Prostate gland (tissue), 2 donors: ENCODE measurements at regions of chr1 and their contacts with region 1.

Region 1: GRCh38 chr1:54950369-54951163 is 29.9 kb upstream of the TMEM61 start:
- DNase-seq: peak; percentile 75
- H3K4me3 ChIP-seq: no peak overlapping the region
- H3K27ac ChIP-seq: no peak overlapping the region
- H3K4me1 ChIP-seq: no peaks in the 10 kb centered on the region
- H3K27me3 ChIP-seq: no peaks in the 10 kb centered on the region
- CTCF ChIP-seq: peak; percentile 64 to 93 (median 90)
- POLR2A ChIP-seq: no peak

Region 2: GRCh38 chr1:54996359-54996868 is 45.8 kb after region 1 on chr1:
- intact Hi-C with region 1: loop called (anchors 2 kb)
- DNase-seq: peak; percentile 43
- H3K4me3 ChIP-seq: no peak overlapping the region
- H3K27ac ChIP-seq: no peak overlapping the region
- H3K4me1 ChIP-seq: no peaks in the 10 kb centered on the region
- H3K27me3 ChIP-seq: no peaks in the 10 kb centered on the region
- CTCF ChIP-seq: peak; percentile 79 to 88 (median 82)
- POLR2A ChIP-seq: no peak